Right ventricle myocardium inferior (tissue), 1 donor: ENCODE measurements at regions of chr13 and their contacts with region 1.

Region 1: GRCh38 chr13:48532506-48533499 is at the start of gene RCBTB2:
- DNase-seq: peak; percentile 100
- ATAC-seq: peak; percentile 98
- total RNA-seq, gene RCBTB2: 16.4 TPM

Region 2: GRCh38 chr13:48346583-48346982 is 186.2 kb before region 1 on chr13:
- intact Hi-C with region 1: no loop called
- DNase-seq: no peak
- ATAC-seq: no peak

Region 3: GRCh38 chr13:48412881-48413351 is 119.9 kb before region 1 on chr13 and contains the start of gene LPAR6:
- intact Hi-C with region 1: loop called (anchors 5 kb)
- DNase-seq: no peak
- ATAC-seq: peak; percentile 65
- total RNA-seq, gene LPAR6: 14.8 TPM

Region 4: DNA sequence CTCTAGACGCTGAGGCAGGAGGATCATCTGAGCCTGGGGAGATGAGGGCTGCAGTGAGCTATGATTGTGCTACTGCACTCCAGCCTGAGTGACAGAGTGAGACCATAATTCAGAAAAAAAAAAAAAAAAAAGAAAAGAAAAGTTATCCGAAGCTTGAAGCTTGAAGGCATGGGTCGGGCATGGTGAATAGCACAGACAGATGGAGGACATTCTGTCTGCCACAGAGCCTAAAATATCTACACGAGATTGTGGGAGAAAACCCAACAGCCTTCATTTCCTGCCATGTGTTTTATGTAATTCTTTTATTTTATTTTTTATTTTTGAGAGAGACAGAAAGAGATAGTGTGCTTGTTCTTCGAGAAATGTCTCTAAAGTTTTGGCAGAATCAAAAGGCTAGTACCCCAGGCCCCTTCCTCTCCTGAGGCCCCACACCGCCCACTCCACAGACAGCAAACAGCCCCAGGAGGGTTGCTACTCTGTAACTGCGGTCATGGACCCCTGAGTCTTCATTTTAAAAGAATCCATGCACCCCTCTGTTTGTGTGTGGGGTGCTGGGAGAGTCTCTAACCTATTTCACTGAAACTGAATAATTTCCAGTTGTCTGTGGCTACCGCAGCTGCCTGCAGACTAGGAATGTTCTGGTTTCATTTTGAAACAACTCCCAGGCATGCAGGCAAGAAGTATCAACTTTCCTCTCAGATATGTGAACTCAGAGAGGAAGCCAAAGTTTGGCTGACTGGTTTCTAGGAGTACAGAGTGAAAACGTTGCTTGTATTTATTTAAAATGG is 38.5 kb after region 1 on chr13:
- intact Hi-C with region 1: loop called (anchors 5 kb)
- DNase-seq: no peak
- ATAC-seq: peak; percentile 71

Region 5: GRCh38 chr13:48741377-48741776 is 208.6 kb after region 1 on chr13:
- intact Hi-C with region 1: no loop called
- DNase-seq: no peak
- ATAC-seq: no peak